ENCODE measurements at regions of chr3 and their contacts with region 1.

Region 1: DNA sequence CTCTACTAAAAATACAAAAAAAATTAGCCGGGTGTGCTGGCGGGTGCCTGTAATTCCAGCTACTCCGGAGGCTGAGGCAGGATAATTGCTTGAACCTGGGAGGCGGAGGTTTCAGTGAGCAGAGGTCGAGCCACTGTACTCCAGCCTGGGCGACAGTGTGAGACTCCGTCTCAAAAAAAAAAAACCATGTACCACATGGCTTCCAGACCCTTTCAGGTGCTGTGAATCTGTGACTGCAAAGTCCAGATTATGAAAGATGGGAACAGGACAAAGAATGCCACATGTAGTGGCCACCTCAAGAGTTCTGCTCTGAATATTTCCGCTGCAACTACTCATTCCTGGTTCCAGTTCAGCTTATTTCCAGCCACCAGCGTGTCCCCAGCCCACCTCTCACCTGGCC is 8.4 kb upstream of the DCAF1 start:
- DNase-seq: no peak
- ATAC-seq: no peak
- H3K4me3 ChIP-seq: no peak overlapping the region
- H3K27ac ChIP-seq: no peak overlapping the region
- H3K4me1 ChIP-seq: no peaks in the 10 kb centered on the region
- H3K27me3 ChIP-seq: no peaks in the 10 kb centered on the region
- CTCF ChIP-seq: no peak

Region 2: DNA sequence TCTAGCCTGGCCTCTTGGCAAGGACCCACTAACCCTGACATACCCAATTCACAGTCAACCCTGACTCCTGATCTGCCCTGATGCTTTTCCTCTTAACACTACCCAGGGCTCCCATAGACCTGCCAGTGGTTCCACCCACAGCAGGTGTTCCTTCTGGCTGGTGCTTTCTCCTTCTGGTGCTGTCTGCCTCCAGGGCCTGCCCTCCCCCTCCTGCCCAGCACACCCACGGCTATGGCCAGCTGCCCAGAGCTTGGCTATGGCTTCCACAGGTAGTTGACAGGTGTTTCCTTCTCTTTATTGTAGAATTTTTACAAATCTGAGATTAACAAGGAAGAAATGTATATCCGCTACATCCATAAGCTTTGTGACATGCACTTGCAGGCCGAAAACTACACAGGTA is 169.6 kb before region 1 on chr3:
- intact Hi-C with region 1: no loop called
- DNase-seq: peak in 1 of 6 donors; percentile 23
- ATAC-seq: peak in 2 of 4 donors; percentile 34 to 62
- H3K4me3 ChIP-seq: no peak overlapping the region
- H3K27ac ChIP-seq: no peak overlapping the region
- H3K4me1 ChIP-seq: no peaks in the 10 kb centered on the region
- H3K27me3 ChIP-seq: no peaks in the 10 kb centered on the region
- CTCF ChIP-seq: no peak

Region 3: GRCh38 chr3:51669241-51670052 is 161.2 kb after region 1 on chr3:
- intact Hi-C with region 1: loop called (anchors 5 to 10 kb)
- DNase-seq: peak; percentile 81 to 96 (median 93)
- ATAC-seq: peak; percentile 52 to 78 (median 70)
- H3K4me3 ChIP-seq: no peak overlapping the region
- H3K27ac ChIP-seq: no peak overlapping the region
- H3K4me1 ChIP-seq: peaks cover 0 to 22% (median 6%) of the 10 kb centered on the region in 3 donors
- H3K27me3 ChIP-seq: no peaks in the 10 kb centered on the region
- CTCF ChIP-seq: peak; percentile 91 to 96 (median 94)

Measured in pancreas (tissue), 10 donors.